WTC11 (cell line): ENCODE measurements at regions of chr1 and their contacts with region 1.

Region 1: DNA sequence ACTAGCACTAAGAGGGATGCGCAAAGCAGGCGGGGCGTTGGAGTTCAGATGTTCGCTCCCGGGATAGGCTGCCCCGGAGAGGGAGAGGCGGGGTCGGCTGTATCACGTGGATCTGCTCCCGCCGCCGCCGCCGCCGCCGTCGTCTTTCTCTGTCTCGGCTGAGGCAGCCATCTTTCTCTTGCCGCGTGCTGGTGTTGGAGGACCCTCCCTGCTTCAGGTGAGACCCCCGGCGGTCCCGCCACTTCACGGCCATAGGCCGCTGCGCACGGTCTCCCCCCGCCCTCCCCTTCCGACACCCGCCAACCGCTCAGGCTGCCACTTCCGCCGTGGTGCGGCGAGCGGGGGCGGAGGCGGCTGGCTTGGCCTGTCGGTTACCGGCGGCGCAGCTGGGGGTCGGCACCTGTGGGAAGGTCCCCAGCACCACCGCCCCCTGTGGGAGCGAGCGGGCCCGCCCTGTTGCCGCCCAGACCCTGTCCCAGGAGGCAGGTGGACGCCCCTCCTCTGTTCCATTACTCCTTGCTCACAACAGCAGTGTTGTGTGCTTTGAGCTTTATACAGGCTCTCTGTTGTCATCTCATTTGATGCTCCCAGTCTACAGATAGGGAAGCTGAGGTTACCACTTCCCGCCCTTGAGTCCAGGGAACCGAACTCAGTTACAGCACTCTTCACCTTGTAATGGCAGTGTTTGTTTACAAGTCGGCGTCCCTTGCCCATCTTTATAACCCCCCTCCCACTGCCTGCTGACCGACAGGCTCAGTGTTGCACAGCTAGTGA is at the start of gene BTF3L4:
- DNase-seq: peak; percentile 98
- ATAC-seq: peak; percentile 90
- H3K4me3 Mint-ChIP-seq: peak within 1 kb of the TSS; percentile 97
- H3K27ac Mint-ChIP-seq: peak within 1 kb of the TSS; percentile 99
- H3K4me1 Mint-ChIP-seq: peaks cover 33% of the 10 kb centered on the region
- H3K27me3 Mint-ChIP-seq: no peaks in the 10 kb centered on the region
- CTCF ChIP-seq: no peak
- total RNA-seq, gene BTF3L4: 74.7 to 89.4 TPM (median 79.0 TPM) in 3 replicates

Region 2: DNA sequence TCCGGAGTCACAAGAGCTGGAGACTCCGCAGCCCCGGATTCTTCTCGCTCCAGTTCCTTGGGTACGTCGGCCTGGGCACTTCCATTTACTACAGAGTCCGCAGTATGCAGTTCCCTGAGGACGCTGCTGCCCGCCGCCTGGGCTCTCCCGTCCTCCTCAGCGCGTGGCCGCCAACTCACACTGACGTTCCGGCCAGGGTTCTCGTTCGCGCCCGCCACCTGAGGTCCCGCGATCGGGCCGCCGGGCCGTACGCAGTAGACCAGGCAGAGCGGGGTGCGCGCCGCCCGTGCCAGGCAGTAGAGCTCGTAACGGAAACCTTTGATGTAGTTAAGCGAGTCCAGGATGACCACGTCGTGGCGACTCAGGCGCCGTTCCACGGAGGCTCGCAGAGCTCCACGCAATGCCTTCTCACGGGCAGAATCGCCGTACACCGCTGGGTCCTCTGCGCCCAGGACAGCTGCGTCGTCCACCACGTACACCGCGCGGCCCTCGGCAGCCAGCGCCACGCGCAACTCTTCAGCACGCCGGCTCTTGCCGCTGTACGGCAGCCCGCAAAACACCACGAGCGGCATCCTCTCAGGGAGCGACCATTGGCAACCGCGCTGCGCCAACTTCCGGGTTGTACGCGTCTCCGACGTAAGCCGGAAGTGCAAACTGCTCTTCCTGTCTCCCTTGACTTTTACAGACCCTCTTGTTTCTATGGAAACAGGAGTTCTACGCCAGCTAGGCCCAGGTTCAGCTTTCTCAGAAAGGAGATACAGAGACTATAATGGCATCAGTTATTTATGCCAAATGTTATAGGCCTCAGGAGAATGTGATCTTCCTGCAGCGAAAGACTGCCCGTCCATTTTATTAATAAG is 22.9 kb before region 1 on chr1 and contains the start of gene KTI12:
- CTCF ChIA-PET with region 1: no interaction called
- POLR2A ChIA-PET with region 1: interaction called, 11 read pairs
- DNase-seq: peak; percentile 76
- ATAC-seq: peak; percentile 87
- H3K4me3 Mint-ChIP-seq: peak within 1 kb of the TSS; percentile 93
- H3K27ac Mint-ChIP-seq: peak within 1 kb of the TSS; percentile 74
- H3K4me1 Mint-ChIP-seq: peaks cover 20% of the 10 kb centered on the region
- H3K27me3 Mint-ChIP-seq: no peaks in the 10 kb centered on the region
- CTCF ChIP-seq: no peak
- total RNA-seq, gene KTI12: 9.4 to 10.1 TPM (median 9.9 TPM) in 3 replicates